Activated B cell treated with CpG ODN at 0.5 μM for 24 hours (primary cell): ENCODE measurements at regions of chr11 and their contacts with region 1.

Region 1: DNA sequence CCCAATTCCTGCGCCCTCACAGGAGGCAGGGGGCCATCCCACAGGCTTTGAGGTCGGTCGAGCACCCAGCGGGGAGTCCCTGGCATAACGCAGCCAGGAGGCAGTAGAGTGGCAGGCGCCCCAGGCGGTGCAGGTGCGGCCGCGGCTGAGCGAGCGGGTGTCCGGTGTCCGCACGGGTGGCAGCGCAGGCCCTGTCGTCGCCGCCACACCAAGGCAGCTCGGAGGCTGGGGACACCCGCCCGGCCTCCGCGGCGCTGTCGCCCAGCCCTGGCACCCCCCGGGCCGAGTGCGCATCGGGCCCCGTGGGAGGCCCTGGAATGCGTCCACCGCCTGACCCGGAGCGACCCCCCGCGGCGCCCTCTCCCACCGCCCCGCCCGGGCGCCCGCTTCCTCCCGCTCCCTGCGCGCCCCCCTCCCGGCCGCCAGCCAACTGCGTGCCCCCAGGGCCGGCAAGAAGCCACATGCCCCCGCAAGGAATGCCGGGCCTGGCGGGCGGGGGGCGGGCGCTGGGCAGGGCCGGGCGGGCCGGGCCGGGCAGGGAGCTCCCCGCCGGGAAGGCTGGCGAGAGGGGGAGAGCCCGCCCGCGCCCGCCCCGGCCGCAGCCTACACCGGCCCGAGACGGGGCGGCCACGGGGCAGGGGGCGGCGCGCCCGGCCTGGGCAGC is 33.9 kb downstream of the PRDM11 start:
- DNase-seq: peak; percentile 26
- ATAC-seq: peak; percentile 50
- H3K4me3 Mint-ChIP-seq: peak overlapping the region; percentile 84
- H3K27ac Mint-ChIP-seq: no peak overlapping the region
- H3K4me1 Mint-ChIP-seq: peaks cover 24% of the 10 kb centered on the region
- H3K27me3 Mint-ChIP-seq: peaks cover 8% of the 10 kb centered on the region
- CTCF ChIP-seq: no peak

Region 2: GRCh38 chr11:44927174-44927661 is 253.1 kb before region 1 on chr11:
- CTCF ChIA-PET with region 1: no interaction called
- POLR2A ChIA-PET with region 1: no interaction called
- intact Hi-C with region 1: no loop called
- DNase-seq: peak; percentile 59
- ATAC-seq: peak; percentile 61
- H3K4me3 Mint-ChIP-seq: no peak overlapping the region
- H3K27ac Mint-ChIP-seq: no peak overlapping the region
- H3K4me1 Mint-ChIP-seq: peaks cover 3% of the 10 kb centered on the region
- H3K27me3 Mint-ChIP-seq: peaks cover 2% of the 10 kb centered on the region
- CTCF ChIP-seq: peak; percentile 38

Region 3: GRCh38 chr11:45163956-45164575 is 16.2 kb before region 1 on chr11:
- CTCF ChIA-PET with region 1: no interaction called
- POLR2A ChIA-PET with region 1: no interaction called
- intact Hi-C with region 1: loop called (anchors 2 kb)
- DNase-seq: no peak
- ATAC-seq: peak; percentile 72
- H3K4me3 Mint-ChIP-seq: no peak overlapping the region
- H3K27ac Mint-ChIP-seq: no peak overlapping the region
- H3K4me1 Mint-ChIP-seq: peaks cover 36% of the 10 kb centered on the region
- H3K27me3 Mint-ChIP-seq: no peaks in the 10 kb centered on the region
- CTCF ChIP-seq: no peak